ENCODE measurements at regions of chr2 and their contacts with region 1.

Region 1: GRCh38 chr2:208254871-208255556 is at the start of gene IDH1:
- DNase-seq: peak; percentile 97 to 99
- ATAC-seq: peak; percentile 98
- H3K4me3 ChIP-seq: peak within 1 kb of the TSS; percentile 51 to 84
- H3K27ac ChIP-seq: peak within 1 kb of the TSS in 1 of 2 donors; percentile 69
- H3K4me1 ChIP-seq: no peaks in the 10 kb centered on the region
- H3K27me3 ChIP-seq: no peaks in the 10 kb centered on the region
- total RNA-seq, gene IDH1: 46.4 to 63.1 TPM

Region 2: DNA sequence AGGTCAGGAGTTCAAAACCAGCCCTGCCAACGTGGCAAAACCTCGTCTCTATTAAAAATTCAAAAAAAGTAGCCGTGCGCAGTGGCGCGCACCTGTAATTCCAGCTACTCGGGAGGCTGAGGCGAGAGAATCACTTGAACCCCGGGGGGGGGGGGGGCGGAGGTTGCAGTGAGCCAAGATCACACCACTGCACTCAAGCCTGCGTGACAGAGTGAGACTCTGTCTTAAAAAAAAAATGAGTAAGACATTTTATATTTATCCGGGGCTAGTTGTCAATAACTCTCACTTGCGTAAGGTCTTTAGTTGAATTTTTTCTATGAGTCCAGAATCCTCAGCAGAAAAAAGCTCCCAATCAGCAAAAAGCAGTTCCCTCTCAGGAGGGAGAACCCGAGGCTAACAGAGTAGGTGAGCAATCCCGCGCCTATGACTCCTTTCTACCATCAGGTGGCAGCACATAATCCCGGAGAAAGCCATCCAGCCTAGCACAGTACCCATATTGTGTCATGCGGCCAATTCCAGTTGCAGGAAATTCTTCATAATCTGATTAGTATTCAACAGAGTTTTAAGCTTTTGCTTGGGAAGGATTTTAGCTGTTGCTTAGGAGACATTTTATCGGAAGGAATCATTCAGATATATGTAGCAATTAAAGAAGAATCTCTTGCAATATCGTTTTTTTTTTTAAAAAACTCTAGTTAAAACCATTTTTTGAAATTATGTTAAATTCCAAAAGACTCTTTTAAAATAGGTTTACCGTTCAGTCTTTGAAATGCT is 79.8 kb before region 1 on chr2:
- intact Hi-C with region 1: loop called in 1 of 2 experiments (anchors 10 kb)
- DNase-seq: peak; percentile 78 to 83
- ATAC-seq: peak; percentile 97
- H3K4me3 ChIP-seq: no peak overlapping the region
- H3K27ac ChIP-seq: no peak overlapping the region
- H3K4me1 ChIP-seq: no peaks in the 10 kb centered on the region
- H3K27me3 ChIP-seq: no peaks in the 10 kb centered on the region

Region 3: GRCh38 chr2:208265801-208266552 is 11.0 kb after region 1 on chr2 and contains the start of gene PIKFYVE:
- intact Hi-C with region 1: loop called in 1 of 2 experiments (anchors 1 kb)
- DNase-seq: peak; percentile 97 to 98
- ATAC-seq: peak; percentile 99
- H3K4me3 ChIP-seq: peak within 1 kb of the TSS; percentile 49 to 96
- H3K27ac ChIP-seq: peak within 1 kb of the TSS; percentile 68 to 69
- H3K4me1 ChIP-seq: no peaks in the 10 kb centered on the region
- H3K27me3 ChIP-seq: no peaks in the 10 kb centered on the region
- total RNA-seq, gene PIKFYVE: 31.9 to 42.6 TPM

Region 4: DNA sequence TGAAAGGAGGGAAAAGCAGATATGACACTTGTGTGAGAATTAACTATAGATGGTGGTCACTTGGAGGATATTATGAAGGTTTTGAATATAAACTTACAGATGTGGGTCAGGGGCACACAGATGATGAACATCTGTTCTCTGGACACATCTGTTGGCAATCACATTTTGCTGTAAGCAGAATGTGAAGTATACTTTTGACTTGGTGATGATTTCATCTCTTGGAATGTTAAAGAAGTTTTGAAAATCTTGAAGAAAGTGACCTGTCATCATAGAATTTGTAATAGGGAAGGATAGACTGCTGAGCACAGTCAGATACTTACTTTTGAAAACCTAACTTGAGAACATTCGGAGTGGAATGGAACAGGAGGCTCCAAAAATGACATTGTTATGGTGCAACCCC is 51.3 kb after region 1 on chr2:
- intact Hi-C with region 1: no loop called
- DNase-seq: no peak
- ATAC-seq: no peak
- H3K4me3 ChIP-seq: no peak overlapping the region
- H3K27ac ChIP-seq: no peak overlapping the region
- H3K4me1 ChIP-seq: no peaks in the 10 kb centered on the region
- H3K27me3 ChIP-seq: no peaks in the 10 kb centered on the region

Region 5: DNA sequence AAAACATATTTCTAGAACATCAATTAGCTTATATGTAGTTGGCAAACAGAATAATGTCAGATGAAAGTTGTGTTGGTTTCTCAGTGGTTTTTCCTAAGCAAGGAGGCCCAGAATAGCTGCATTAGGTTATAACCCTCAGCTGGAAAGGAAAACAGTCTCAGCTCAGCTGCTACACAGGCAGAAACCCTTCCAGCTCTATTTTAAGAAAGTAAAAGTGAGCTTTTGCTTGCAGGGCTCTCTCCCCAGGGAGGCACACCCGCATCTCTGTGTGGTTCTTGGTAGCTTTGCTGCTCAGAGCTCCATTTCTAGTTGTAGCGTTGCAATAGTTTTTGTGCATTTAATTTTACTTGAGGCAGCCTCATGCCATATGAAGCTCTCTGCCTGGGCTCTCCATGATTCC is 65.7 kb after region 1 on chr2:
- intact Hi-C with region 1: loop called in 1 of 2 experiments (anchors 2 kb)
- DNase-seq: peak; percentile 85 to 86
- ATAC-seq: peak; percentile 93
- H3K4me3 ChIP-seq: no peak overlapping the region
- H3K27ac ChIP-seq: peak overlapping the region in 1 of 2 donors; percentile 4
- H3K4me1 ChIP-seq: no peaks in the 10 kb centered on the region
- H3K27me3 ChIP-seq: no peaks in the 10 kb centered on the region

Measured in aorta (tissue), 5 donors.